ENCODE measurements at regions of chr1 and their contacts with region 1.

Region 1: DNA sequence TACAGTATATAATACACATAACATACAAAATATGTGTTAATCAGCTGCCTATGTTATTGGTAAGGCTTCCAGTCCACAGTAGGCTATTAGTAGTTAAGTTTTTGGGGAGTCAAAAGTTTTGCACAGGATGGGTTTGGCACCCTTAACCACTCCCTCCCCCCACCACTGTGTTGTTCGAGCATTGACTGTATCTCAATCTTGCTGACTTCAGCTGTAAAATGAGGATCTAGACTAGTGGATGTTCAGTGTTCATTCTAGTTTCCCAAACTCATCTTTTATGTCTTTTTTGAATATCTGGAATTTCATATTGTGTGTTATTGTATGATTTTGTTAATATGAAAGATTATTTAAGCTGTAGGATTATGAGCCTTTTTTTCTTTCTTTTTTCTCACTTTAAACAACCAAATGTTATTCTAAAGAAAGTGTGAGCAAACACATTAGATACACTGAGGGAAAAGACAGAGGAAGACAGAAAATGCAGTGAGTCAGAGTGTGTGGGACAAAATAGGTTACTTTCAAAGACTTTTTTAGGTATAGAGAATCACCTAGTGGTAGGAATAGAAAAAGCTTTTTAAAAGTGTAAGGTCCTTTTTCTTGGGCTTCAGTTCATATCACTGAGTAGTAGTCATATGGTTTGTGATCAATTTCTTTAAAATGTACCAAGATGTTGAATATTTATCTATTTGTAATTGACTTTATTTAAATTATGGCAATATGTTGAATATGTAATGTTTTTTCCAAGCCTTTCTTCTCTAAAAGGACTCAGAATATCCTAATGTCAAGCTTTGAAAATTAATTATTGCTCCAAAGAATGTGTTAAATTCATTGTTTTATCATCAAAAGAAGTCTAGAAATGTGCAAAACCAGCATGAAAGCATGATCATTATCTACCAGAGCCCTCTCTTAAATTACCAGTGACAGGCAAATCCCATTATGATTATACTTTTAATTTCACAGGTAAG is 17.9 kb upstream of the CENPF start:
- DNase-seq: no peak
- ATAC-seq: peak; percentile 44 to 75
- H3K4me3 ChIP-seq: no peak overlapping the region
- H3K27ac ChIP-seq: no peak overlapping the region
- H3K4me1 ChIP-seq: peaks cover 19% of the 10 kb centered on the region in 2 donors
- H3K27me3 ChIP-seq: no peaks in the 10 kb centered on the region
- CTCF ChIP-seq: peak; percentile 55 to 93 (median 63)
- POLR2A ChIP-seq: no peak

Region 2: DNA sequence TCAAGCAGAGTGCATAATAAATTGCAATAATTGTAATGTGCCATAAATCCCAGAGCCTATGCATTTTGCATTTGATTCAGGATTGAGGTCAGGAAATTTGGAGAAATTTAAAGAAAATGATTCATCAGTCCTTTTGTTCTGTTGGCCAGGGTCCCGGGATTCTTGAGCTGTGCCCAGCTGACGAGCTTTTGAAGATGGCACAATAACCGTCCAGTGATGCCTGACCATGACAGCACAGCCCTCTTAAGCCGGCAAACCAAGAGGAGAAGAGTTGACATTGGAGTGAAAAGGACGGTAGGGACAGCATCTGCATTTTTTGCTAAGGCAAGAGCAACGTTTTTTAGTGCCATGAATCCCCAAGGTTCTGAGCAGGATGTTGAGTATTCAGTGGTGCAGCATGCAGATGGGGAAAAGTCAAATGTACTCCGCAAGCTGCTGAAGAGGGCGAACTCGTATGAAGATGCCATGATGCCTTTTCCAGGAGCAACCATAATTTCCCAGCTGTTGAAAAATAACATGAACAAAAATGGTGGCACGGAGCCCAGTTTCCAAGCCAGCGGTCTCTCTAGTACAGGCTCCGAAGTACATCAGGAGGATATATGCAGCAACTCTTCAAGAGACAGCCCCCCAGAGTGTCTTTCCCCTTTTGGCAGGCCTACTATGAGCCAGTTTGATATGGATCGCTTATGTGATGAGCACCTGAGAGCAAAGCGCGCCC is 588.6 kb before region 1 on chr1:
- in situ Hi-C with region 1: no loop called
- intact Hi-C with region 1: loop called (anchors 10 kb)
- DNase-seq: peak; percentile 32 to 66
- ATAC-seq: peak; percentile 93 to 94
- H3K4me3 ChIP-seq: peak overlapping the region in 2 of 4 donors; percentile 0 to 1
- H3K27ac ChIP-seq: peak overlapping the region; percentile 58 to 69 (median 62)
- H3K4me1 ChIP-seq: peaks cover 10 to 11% of the 10 kb centered on the region in 2 donors
- H3K27me3 ChIP-seq: peaks cover 0 to 3% (median 2%) of the 10 kb centered on the region in 3 donors
- CTCF ChIP-seq: no peak
- POLR2A ChIP-seq: no peak

Region 3: DNA sequence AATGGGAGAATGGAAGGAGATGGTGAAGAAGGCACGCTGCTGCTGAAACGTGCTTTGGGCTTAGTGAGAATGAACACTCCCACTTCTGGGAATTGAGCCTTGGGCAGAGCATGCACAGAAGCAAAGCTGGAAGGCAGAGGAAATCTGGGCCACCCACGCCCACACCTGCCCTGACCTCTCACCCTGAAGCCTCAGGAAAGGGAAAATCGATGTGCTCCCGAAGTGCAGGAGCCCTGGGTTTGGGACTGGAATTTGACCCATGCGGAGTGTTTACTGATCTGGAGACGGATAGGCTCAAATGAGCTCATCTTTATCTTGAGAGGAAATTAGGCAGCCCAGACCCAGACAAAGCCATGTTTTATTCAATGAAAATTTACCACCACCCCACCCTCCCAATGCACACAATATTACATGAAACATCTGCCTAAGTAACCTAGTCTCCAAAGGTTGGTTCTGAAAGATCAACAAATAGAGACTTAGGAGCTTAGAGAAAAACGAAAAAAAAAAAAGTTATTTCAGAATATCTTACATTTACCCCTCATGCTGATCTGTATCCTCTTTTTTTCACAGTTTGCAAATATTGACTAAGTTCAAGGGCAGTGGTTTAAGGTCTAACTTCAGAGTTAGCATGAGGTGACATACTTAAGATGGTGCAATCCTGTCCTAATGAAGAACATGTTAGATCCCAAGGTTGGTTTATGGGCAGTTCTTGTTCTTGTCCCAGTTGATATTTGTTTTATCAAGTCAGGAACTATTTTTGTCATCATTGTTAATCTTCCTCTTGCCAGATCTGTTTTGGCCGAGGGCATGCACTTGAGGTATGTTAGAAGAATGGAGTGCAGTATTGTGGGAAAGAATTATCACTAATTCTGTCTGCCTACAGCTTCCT is 534.3 kb before region 1 on chr1:
- in situ Hi-C with region 1: no loop called
- intact Hi-C with region 1: no loop called
- DNase-seq: no peak
- ATAC-seq: peak in 1 of 2 donors; percentile 23
- H3K4me3 ChIP-seq: no peak overlapping the region
- H3K27ac ChIP-seq: no peak overlapping the region
- H3K4me1 ChIP-seq: no peaks in the 10 kb centered on the region
- H3K27me3 ChIP-seq: no peaks in the 10 kb centered on the region
- CTCF ChIP-seq: no peak
- POLR2A ChIP-seq: no peak

Region 4: DNA sequence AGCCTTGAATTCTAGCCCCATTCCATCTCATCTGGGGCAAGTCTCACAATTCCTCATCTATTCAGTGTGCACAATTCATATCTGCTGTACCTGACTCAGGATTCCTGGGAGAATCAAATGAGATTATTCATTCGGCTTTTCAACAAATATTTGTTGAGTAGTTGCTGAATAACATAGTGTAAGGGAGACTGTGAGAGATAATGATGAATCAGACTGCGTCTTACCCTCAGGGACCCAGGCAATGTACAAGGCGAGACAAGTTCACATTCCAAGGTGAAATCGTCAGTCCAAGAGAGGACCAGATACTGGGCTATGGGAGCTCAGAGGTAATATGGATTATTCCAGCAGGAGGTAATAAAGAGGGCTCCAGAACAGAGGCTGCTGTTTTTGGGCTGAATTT is 371.9 kb before region 1 on chr1:
- in situ Hi-C with region 1: loop called (anchors 25 kb)
- intact Hi-C with region 1: loop called (anchors 5 kb)
- DNase-seq: no peak
- ATAC-seq: no peak
- H3K4me3 ChIP-seq: no peak overlapping the region
- H3K27ac ChIP-seq: no peak overlapping the region
- H3K4me1 ChIP-seq: peaks cover 8 to 13% of the 10 kb centered on the region in 2 donors
- H3K27me3 ChIP-seq: no peaks in the 10 kb centered on the region
- CTCF ChIP-seq: no peak
- POLR2A ChIP-seq: no peak

Region 5: DNA sequence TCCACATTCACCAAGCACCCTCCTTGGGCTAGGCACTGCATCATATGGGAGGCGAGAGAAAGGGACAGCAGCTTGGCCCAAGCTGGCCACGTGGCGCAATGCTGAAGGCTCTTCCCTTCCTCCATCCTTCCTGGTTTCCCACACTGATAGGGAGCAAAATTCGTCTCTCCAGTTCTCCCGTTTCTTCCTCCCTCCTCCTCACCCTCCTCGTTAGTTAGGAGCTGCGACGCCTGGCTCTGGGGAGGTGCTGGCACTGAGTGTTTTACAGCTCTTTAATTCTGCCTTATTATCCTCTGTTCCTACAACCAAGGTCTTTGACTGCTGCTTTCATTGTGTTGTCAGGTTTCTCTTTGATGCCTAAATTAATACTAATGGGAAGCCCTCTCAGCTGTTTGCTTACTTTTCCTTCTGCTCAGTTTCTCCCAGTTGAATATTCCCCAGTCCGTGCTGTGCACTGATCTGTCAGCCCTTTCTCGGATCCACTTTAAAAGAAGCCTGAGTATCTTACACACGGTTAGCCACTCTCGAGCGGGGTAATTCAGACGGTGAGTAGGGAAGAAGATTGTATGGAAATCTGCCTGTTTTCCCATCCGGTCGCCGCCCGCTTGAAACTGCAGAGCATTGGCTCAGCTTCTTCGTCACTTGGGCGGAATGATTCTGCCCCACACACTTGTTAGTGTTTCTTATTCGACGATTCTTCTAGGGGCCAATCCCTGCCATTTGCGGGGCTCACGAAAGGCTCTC is 360.3 kb before region 1 on chr1:
- in situ Hi-C with region 1: loop called (anchors 25 kb)
- intact Hi-C with region 1: no loop called
- DNase-seq: no peak
- ATAC-seq: no peak
- H3K4me3 ChIP-seq: peak overlapping the region; percentile 36 to 44 (median 41)
- H3K27ac ChIP-seq: peak overlapping the region; percentile 44 to 70 (median 62)
- H3K4me1 ChIP-seq: peaks cover 23 to 27% of the 10 kb centered on the region in 2 donors
- H3K27me3 ChIP-seq: no peaks in the 10 kb centered on the region
- CTCF ChIP-seq: no peak
- POLR2A ChIP-seq: no peak

Region 6: GRCh38 chr1:214328770-214329469 is 256.2 kb before region 1 on chr1:
- in situ Hi-C with region 1: loop called (anchors 5 to 10 kb)
- intact Hi-C with region 1: loop called (anchors 1 kb)
- DNase-seq: peak; percentile 73 to 82
- ATAC-seq: peak; percentile 93 to 95
- H3K4me3 ChIP-seq: no peak overlapping the region
- H3K27ac ChIP-seq: no peak overlapping the region
- H3K4me1 ChIP-seq: peaks cover 6 to 15% of the 10 kb centered on the region in 2 donors
- H3K27me3 ChIP-seq: no peaks in the 10 kb centered on the region
- CTCF ChIP-seq: peak; percentile 92 to 98 (median 96)
- POLR2A ChIP-seq: no peak

Region 7: GRCh38 chr1:214386747-214387146 is 198.3 kb before region 1 on chr1:
- in situ Hi-C with region 1: no loop called
- intact Hi-C with region 1: loop called (anchors 2 kb)
- DNase-seq: peak; percentile 45 to 65
- ATAC-seq: peak; percentile 84 to 89
- H3K4me3 ChIP-seq: no peak overlapping the region
- H3K27ac ChIP-seq: peak overlapping the region; percentile 52 to 68 (median 58)
- H3K4me1 ChIP-seq: peaks cover 0 to 3% of the 10 kb centered on the region in 2 donors
- H3K27me3 ChIP-seq: no peaks in the 10 kb centered on the region
- CTCF ChIP-seq: no peak
- POLR2A ChIP-seq: no peak

Region 8: DNA sequence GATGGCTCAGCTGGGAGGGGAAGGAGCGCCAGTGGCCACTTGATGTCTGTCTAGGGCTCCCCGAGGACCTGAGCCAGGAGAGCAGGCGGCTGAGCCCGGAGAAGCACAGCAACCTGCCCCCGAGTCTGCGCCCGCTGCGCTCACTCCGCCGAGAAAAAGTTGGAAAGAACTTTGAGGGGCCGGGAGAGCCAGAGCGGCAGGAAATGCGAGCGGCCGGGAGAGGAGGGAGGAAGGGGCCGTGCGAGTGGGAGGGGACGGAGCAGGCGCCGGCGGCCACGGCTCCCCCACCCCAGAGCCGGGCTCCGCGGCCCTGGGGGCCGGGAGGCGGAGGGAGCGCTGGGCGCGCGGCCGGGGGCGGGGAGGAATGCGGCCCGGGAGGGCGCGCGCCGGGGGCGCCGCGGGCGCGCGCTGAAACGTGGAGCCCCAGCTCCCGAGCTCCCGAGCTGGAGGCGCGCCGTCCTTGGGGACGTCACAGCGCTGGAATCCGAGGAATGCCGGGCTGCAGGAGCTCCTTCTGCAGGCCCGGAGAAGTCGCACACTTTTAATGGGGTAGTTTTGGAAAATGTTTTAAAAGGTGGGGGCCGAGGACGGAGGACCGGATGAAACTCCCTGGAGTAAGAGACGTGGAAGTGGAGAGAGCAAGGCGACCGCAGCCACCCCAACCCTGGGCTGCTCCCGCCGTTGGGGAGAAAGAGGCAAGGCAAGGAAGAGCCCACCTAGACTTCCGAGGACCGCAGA is 33.5 kb before region 1 on chr1 and contains the start of gene PTPN14:
- in situ Hi-C with region 1: no loop called
- intact Hi-C with region 1: loop called (anchors 2 kb)
- DNase-seq: peak; percentile 64 to 80
- ATAC-seq: peak; percentile 73 to 75
- H3K4me3 ChIP-seq: peak within 1 kb of the TSS; percentile 68 to 96 (median 87)
- H3K27ac ChIP-seq: peak within 1 kb of the TSS; percentile 93 to 99 (median 95)
- H3K4me1 ChIP-seq: peaks cover 37 to 38% of the 10 kb centered on the region in 2 donors
- H3K27me3 ChIP-seq: no peaks in the 10 kb centered on the region
- CTCF ChIP-seq: peak in 3 of 5 experiments; percentile 13 to 39 (median 21)
- POLR2A ChIP-seq: peak; percentile 80 to 82
- total RNA-seq, gene PTPN14: 42.8 to 63.8 (median 50.4) TPM